WTC11 (cell line): ENCODE measurements at regions of chr17 and their contacts with region 1.

Region 1: GRCh38 chr17:40531051-40531991 is 29.9 kb upstream of the TNS4 start:
- DNase-seq: peak; percentile 8
- ATAC-seq: no peak
- H3K4me3 Mint-ChIP-seq: no peak overlapping the region
- H3K27ac Mint-ChIP-seq: no peak overlapping the region
- H3K4me1 Mint-ChIP-seq: peaks cover 19% of the 10 kb centered on the region
- H3K27me3 Mint-ChIP-seq: no peaks in the 10 kb centered on the region; the same call in 1 of the 2 replicates
- CTCF ChIP-seq: no peak

Region 2: DNA sequence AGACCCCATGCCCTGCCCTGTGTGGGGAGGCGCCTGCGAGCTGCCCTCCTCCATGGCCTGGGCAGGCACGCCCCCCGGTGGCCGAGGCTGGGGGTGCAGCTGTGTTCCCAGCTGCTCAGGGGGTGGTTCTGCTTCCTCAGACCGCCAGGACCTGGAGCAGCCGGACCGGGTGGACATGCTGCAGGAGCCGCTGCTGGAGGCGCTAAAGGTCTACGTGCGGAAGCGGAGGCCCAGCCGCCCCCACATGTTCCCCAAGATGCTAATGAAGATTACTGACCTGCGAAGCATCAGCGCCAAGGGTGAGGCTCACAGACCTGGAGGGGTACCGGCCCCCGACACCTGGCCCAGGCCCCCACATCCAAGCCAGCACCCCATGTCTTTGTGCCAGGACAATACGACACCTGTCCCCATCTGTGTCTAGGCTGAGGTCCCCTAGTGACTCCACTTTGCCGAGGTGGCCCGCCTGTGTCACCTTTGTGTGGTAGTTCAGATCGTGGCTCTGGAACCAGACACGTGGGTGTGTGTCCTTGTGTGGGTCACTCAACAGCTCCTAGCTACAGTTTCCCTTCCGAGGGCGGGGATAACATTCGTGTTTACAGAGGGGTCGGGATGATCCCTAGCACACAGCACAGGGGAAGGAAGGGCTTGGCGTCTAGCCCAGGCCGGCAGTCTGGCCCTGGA is 176.1 kb before region 1 on chr17:
- CTCF ChIA-PET with region 1: interaction called, 102 read pairs
- POLR2A ChIA-PET with region 1: interaction called, 4 read pairs
- DNase-seq: peak; percentile 96
- ATAC-seq: peak; percentile 87
- H3K4me3 Mint-ChIP-seq: no peak overlapping the region
- H3K27ac Mint-ChIP-seq: no peak overlapping the region; the same call in 1 of the 2 replicates
- H3K4me1 Mint-ChIP-seq: peaks cover 48% of the 10 kb centered on the region
- H3K27me3 Mint-ChIP-seq: peaks cover 3% of the 10 kb centered on the region
- CTCF ChIP-seq: peak; percentile 98

Region 3: DNA sequence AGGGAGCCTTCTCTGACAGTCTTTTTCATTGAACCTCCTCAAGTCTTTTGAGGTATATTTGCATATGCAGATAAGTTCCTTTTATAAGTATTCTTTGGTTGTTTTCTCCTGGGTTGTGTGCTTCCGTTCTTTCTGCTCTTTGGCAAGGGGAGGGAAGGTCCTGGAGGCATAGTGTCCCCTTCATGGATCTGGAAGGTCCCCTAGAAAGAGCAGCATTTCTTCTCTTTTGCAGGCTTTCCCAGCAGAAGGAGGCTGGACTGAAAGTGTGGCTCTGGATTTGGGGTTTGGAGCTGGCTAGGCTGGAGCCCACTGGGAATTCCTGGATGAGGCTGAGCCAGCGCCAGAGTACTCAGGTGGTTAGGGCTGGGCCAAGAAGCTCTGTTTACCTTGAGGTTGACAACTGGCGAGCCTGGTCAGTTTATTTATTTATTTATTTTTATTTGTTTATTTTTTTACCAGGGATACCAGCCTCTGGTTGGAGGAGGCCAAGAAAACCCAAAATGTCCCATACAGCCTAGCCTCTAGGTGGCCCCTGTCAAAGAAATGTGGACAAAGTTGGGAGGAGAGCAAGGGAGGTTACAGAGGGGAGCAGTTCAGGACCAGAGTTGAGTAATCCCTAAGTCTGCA is 108.2 kb before region 1 on chr17:
- CTCF ChIA-PET with region 1: interaction called, 41 read pairs
- POLR2A ChIA-PET with region 1: interaction called, 7 read pairs
- DNase-seq: peak; percentile 67
- ATAC-seq: peak; percentile 80
- H3K4me3 Mint-ChIP-seq: peak overlapping the region; percentile 51
- H3K27ac Mint-ChIP-seq: peak overlapping the region; percentile 91
- H3K4me1 Mint-ChIP-seq: peaks cover 49% of the 10 kb centered on the region
- H3K27me3 Mint-ChIP-seq: no peaks in the 10 kb centered on the region; the same call in 1 of the 2 replicates
- CTCF ChIP-seq: no peak

Region 4: DNA sequence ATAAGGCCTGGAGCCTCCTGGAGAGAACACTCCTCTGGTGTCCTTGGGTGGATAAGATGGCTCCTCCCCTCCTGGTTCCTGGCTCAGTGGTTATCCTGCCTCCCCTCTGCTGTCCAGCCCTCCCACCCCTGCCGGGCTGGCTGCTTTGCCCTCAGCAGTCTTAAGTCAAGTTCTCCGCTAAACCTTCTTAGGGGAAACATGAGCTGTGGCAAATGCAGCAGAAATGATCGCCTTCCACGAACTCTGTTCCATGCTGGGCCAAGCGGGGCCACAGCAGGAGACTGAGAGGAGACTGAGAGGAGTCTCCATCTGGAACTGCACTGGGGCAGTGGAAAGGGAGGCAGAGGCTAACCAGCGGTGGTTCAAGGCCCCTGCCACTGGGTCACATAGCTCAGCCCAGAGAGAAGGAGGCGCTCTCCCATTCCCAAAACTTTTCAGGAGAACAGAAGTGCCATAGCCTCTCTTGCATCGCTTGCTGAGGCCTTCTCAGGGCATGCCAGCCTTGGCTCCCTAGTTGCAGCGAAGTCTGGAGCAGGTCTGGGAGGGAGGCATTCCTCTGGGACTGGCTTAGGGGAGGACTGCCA is 56.8 kb before region 1 on chr17:
- CTCF ChIA-PET with region 1: interaction called, 117 read pairs
- POLR2A ChIA-PET with region 1: interaction called, 12 read pairs
- DNase-seq: no peak
- ATAC-seq: no peak
- H3K4me3 Mint-ChIP-seq: no peak overlapping the region
- H3K27ac Mint-ChIP-seq: no peak overlapping the region
- H3K4me1 Mint-ChIP-seq: peaks cover 32% of the 10 kb centered on the region
- H3K27me3 Mint-ChIP-seq: peaks cover 6% of the 10 kb centered on the region
- CTCF ChIP-seq: no peak

Region 5: GRCh38 chr17:40518401-40519121 is 12.8 kb before region 1 on chr17:
- CTCF ChIA-PET with region 1: interaction called, 10 read pairs
- POLR2A ChIA-PET with region 1: no interaction called
- DNase-seq: no peak
- ATAC-seq: peak; percentile 74
- H3K4me3 Mint-ChIP-seq: no peak overlapping the region
- H3K27ac Mint-ChIP-seq: no peak overlapping the region
- H3K4me1 Mint-ChIP-seq: peaks cover 24% of the 10 kb centered on the region
- H3K27me3 Mint-ChIP-seq: no peaks in the 10 kb centered on the region
- CTCF ChIP-seq: no peak

Region 6: GRCh38 chr17:40615295-40615988 is 84.1 kb after region 1 on chr17:
- CTCF ChIA-PET with region 1: interaction called, 11 read pairs
- POLR2A ChIA-PET with region 1: no interaction called
- DNase-seq: peak; percentile 73
- ATAC-seq: peak; percentile 82
- H3K4me3 Mint-ChIP-seq: no peak overlapping the region
- H3K27ac Mint-ChIP-seq: no peak overlapping the region
- H3K4me1 Mint-ChIP-seq: peaks cover 5% of the 10 kb centered on the region
- H3K27me3 Mint-ChIP-seq: peaks cover 6% of the 10 kb centered on the region; the same call in 1 of the 2 replicates
- CTCF ChIP-seq: no peak

Region 7: DNA sequence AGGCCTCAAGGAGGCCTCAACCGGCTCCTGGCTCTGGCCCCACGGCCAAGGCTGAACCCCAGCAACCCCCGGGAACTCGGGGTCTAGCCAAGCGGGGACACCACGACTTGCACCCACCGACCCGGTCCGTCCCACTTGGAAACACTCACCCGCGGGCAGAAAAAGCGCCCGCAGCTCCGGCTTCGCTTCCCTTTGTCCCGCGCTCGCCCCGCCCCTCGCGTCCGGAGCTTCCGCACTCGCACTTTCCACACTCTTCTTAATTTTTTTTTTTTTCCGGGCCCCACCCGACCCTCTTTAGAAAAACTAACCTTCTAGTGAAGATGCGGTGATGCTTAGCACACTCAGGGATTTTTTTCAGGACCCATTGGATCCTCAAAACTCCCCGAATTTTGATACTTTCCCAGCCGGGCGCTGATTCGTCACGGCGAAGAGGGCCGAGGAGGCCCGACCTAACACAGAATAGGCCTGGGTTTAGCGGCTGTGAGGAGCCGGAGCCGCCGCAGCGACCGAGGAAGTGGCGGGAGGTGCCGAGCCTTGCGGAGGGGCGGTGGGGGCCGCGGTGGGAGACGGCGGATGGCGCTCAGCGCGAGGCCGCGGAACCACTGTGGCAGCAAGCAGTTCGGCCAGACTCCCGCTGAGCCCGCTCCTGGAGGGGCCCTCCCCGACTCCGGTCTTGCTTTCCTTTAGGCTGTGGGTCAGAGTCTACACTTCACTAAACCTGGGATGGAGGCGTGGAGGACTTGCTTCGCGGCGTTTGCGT is 116.5 kb after region 1 on chr17 and contains the start of gene SMARCE1:
- CTCF ChIA-PET with region 1: no interaction called
- POLR2A ChIA-PET with region 1: no interaction called
- DNase-seq: peak; percentile 77
- ATAC-seq: peak; percentile 86
- H3K4me3 Mint-ChIP-seq: peak within 1 kb of the TSS; percentile 90
- H3K27ac Mint-ChIP-seq: peak within 1 kb of the TSS; percentile 99
- H3K4me1 Mint-ChIP-seq: peaks cover 14% of the 10 kb centered on the region
- H3K27me3 Mint-ChIP-seq: peaks cover 6% of the 10 kb centered on the region; the same call in 1 of the 2 replicates
- CTCF ChIP-seq: no peak
- total RNA-seq, gene SMARCE1: 109 to 114 TPM (median 114 TPM) in 3 replicates

Region 8: GRCh38 chr17:40664582-40665333 is 133.4 kb after region 1 on chr17 and contains the start of gene KRT222:
- CTCF ChIA-PET with region 1: no interaction called
- POLR2A ChIA-PET with region 1: no interaction called
- DNase-seq: no peak
- ATAC-seq: peak; percentile 41
- H3K4me3 Mint-ChIP-seq: peak within 1 kb of the TSS; percentile 73
- H3K27ac Mint-ChIP-seq: no peak within 1 kb of the TSS
- H3K4me1 Mint-ChIP-seq: peaks cover 16% of the 10 kb centered on the region
- H3K27me3 Mint-ChIP-seq: no peaks in the 10 kb centered on the region
- CTCF ChIP-seq: no peak
- total RNA-seq, gene KRT222: 0.09 to 0.34 TPM (median 0.30 TPM) in 3 replicates

Region 9: GRCh38 chr17:41008805-41009204 is 477.5 kb after region 1 on chr17 and contains the start of gene KRTAP3-1:
- CTCF ChIA-PET with region 1: no interaction called
- POLR2A ChIA-PET with region 1: no interaction called
- DNase-seq: no peak
- ATAC-seq: peak; percentile 30
- H3K4me3 Mint-ChIP-seq: no peak within 1 kb of the TSS
- H3K27ac Mint-ChIP-seq: peak within 1 kb of the TSS; percentile 36; the same call in 1 of the 2 replicates
- H3K4me1 Mint-ChIP-seq: peaks cover 15% of the 10 kb centered on the region
- H3K27me3 Mint-ChIP-seq: no peaks in the 10 kb centered on the region
- CTCF ChIP-seq: no peak
- total RNA-seq, gene KRTAP3-1: not detected in 3 replicates